CD4-positive, alpha-beta T cell (primary cell): ENCODE measurements at regions of chr1 and their contacts with region 1.

Region 1: GRCh38 chr1:9234223-9235095 is at the start of gene H6PD:
- DNase-seq: peak; percentile 39 to 91 (median 66)
- ATAC-seq: peak; percentile 80
- H3K4me3 ChIP-seq: peak within 1 kb of the TSS; percentile 78
- H3K4me3 Mint-ChIP-seq: peak within 1 kb of the TSS; percentile 97
- H3K27ac ChIP-seq: peak within 1 kb of the TSS; percentile 59 to 68
- H3K27ac Mint-ChIP-seq: peak within 1 kb of the TSS; percentile 87
- H3K4me1 ChIP-seq: peaks cover 41% of the 10 kb centered on the region
- H3K4me1 Mint-ChIP-seq: peaks cover 37% of the 10 kb centered on the region
- H3K27me3 ChIP-seq: no peaks in the 10 kb centered on the region
- H3K27me3 Mint-ChIP-seq: no peaks in the 10 kb centered on the region
- CTCF ChIP-seq: peak; percentile 14
- total RNA-seq, gene H6PD: 13.6 to 13.9 TPM

Region 2: DNA sequence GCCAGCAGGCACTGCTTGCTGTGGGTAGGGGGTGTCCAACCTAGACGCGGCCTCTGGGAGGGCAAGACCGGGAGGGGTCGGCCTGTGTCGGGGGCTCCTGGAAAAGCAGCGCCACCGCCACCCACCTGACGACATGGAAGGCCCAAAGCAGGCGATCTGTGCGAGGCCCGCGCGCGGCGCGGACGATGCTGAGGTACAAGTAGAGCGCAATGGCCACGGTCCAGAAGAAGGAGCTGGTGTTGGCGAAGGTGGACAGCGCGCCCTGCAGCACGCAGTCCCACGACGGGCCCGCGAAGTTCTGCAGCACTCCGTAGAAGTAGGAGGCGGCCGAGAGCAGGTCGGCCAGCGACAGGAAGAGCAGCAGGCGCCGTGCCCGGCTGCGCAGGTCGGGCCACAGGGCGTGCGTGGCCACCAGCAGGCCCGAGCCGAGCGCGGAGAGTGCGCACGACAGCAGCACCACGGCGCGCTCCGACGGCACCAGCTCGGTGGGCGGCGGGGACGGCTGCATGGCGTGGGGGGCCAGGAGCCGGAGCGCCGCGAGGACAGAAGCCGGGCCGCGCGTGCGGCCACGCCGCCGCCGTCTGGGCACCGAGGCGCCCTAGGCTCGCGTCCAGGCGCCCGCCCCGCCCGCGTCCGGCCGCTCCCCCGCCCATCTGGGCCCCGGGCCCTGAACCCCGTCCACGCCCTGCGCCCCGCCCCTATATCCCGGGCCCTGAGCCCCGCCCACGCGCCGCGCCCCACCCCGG is 105.8 kb before region 1 on chr1 and contains the start of gene GPR157:
- CTCF ChIA-PET with region 1: interaction called, 5 read pairs
- POLR2A ChIA-PET with region 1: interaction called, 4 read pairs
- intact Hi-C with region 1: loop called in 1 of 2 experiments (anchors 2 kb)
- DNase-seq: peak; percentile 65 to 93 (median 81)
- ATAC-seq: peak; percentile 86
- H3K4me3 ChIP-seq: peak within 1 kb of the TSS; percentile 70
- H3K4me3 Mint-ChIP-seq: peak within 1 kb of the TSS; percentile 91
- H3K27ac ChIP-seq: peak within 1 kb of the TSS; percentile 56
- H3K27ac Mint-ChIP-seq: peak within 1 kb of the TSS; percentile 70
- H3K4me1 ChIP-seq: peaks cover 25% of the 10 kb centered on the region
- H3K4me1 Mint-ChIP-seq: peaks cover 40% of the 10 kb centered on the region
- H3K27me3 ChIP-seq: no peaks in the 10 kb centered on the region
- H3K27me3 Mint-ChIP-seq: no peaks in the 10 kb centered on the region
- CTCF ChIP-seq: no peak
- total RNA-seq, gene GPR157: 2.1 to 5.1 TPM

Region 3: DNA sequence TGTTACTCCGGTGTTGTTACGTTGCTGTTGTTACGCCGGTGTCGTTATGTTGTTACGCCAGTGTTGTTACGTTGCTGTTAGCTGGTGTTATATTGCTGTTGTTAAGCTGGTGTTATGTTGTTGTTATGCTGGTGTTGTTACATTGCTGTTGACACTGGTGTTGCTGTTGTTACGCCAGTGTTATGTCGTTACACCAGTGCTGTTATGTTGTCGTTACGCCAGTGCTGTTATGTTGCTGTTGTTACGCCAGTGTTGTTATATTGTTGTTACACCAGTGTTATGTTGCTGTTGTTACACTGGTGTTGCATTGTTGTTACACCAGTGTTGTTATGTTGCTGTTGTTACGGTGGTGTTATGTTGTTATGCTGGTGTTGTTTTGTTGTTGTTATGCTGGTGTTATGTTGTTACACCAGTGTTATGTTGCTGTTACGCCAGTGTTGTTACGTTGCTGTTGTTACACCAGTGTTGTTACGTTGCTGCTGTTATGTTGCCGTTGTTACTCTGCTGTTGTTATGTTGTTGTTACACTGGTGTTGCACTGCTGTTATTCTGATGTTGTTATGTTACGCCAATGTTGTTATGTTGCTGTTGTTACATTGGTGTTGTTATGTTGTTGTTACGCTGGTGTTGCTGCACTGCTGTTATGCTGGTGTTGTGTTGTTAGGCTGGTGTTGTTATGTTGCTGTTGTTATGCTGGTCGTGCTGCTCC is 25.8 kb after region 1 on chr1:
- CTCF ChIA-PET with region 1: no interaction called
- POLR2A ChIA-PET with region 1: no interaction called
- intact Hi-C with region 1: no loop called
- DNase-seq: no peak
- ATAC-seq: no peak
- H3K4me3 ChIP-seq: no peak overlapping the region
- H3K4me3 Mint-ChIP-seq: no peak overlapping the region
- H3K27ac ChIP-seq: no peak overlapping the region
- H3K27ac Mint-ChIP-seq: no peak overlapping the region
- H3K4me1 ChIP-seq: peaks cover 6% of the 10 kb centered on the region
- H3K4me1 Mint-ChIP-seq: peaks cover 30% of the 10 kb centered on the region
- H3K27me3 ChIP-seq: no peaks in the 10 kb centered on the region
- H3K27me3 Mint-ChIP-seq: no peaks in the 10 kb centered on the region
- CTCF ChIP-seq: no peak

Region 4: DNA sequence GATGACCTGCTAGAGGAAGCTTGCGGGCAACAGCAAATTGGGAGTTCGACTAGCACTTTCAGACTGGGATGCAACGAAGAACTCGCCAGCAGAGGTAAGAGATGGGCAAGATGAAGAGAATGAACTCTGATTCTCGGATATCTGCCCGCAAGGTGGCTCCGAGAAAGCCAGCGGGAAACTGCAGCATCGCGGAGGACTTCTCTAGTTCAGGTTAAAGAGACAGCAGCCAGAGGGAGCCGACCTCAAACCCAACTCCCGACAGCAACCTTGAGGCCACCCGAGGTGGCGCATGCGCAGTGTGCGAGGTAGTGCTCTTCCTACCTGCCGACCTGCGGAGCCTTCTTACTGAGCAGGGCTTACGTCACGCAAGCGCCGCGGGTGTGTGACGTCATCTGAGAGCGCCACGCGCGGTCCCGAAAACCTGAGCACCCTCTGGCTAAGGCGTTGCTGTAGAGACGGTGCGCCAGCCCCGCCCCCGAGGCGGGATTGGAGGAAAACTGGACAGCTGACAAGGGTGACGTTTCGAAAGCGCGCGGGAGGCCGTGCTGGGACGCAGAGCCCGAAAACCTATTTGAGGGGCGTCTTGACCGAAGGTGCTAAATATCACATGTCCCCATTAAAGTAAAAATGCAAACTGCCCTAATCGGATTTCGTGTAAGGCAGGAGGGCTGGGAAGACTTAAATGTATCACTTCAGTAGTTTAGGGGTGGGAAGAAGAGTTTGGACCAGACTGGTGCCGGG is 194.3 kb after region 1 on chr1:
- CTCF ChIA-PET with region 1: interaction called, 3 read pairs
- POLR2A ChIA-PET with region 1: interaction called, 4 read pairs
- intact Hi-C with region 1: loop called in 1 of 2 experiments (anchors 5 kb)
- DNase-seq: peak; percentile 99 to 100 (median 100)
- ATAC-seq: peak; percentile 72
- H3K4me3 ChIP-seq: peak overlapping the region; percentile 66
- H3K4me3 Mint-ChIP-seq: peak overlapping the region; percentile 91
- H3K27ac ChIP-seq: peak overlapping the region; percentile 72 to 82
- H3K27ac Mint-ChIP-seq: peak overlapping the region; percentile 92
- H3K4me1 ChIP-seq: peaks cover 55% of the 10 kb centered on the region
- H3K4me1 Mint-ChIP-seq: peaks cover 56% of the 10 kb centered on the region
- H3K27me3 ChIP-seq: no peaks in the 10 kb centered on the region
- H3K27me3 Mint-ChIP-seq: no peaks in the 10 kb centered on the region
- CTCF ChIP-seq: no peak

Region 5: GRCh38 chr1:9588551-9589143 is 354.2 kb after region 1 on chr1 and contains the start of gene TMEM201:
- CTCF ChIA-PET with region 1: interaction called, 3 read pairs
- POLR2A ChIA-PET with region 1: no interaction called
- intact Hi-C with region 1: loop called in 1 of 2 experiments (anchors 2 kb)
- DNase-seq: peak; percentile 87 to 98 (median 94)
- ATAC-seq: peak; percentile 91
- H3K4me3 ChIP-seq: peak within 1 kb of the TSS; percentile 66
- H3K4me3 Mint-ChIP-seq: peak within 1 kb of the TSS; percentile 92
- H3K27ac ChIP-seq: no peak within 1 kb of the TSS
- H3K27ac Mint-ChIP-seq: peak within 1 kb of the TSS; percentile 65
- H3K4me1 ChIP-seq: peaks cover 38% of the 10 kb centered on the region
- H3K4me1 Mint-ChIP-seq: peaks cover 33% of the 10 kb centered on the region
- H3K27me3 ChIP-seq: no peaks in the 10 kb centered on the region
- H3K27me3 Mint-ChIP-seq: no peaks in the 10 kb centered on the region
- CTCF ChIP-seq: peak; percentile 6
- total RNA-seq, gene TMEM201: 9.1 to 9.2 TPM

Region 6: DNA sequence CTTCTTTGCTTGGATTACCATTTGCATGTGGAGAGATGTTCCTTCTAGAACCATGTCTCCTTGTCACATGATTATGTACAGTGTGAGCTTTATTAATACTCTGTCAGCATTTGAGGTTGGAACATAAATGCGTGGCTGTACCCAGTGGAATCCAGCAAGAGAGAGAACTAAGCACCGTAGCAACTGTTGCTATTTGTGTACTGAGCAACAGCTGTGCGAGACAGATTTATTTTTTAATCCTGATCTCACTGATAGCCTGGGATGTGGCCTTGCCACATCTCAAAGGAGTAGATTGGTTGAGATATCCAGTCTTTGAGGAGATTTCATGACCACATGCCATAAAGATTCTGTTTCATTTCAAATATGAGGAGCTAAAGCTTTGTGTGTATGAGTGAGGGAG is 1019.3 kb after region 1 on chr1:
- CTCF ChIA-PET with region 1: no interaction called
- POLR2A ChIA-PET with region 1: no interaction called
- intact Hi-C with region 1: no loop called
- DNase-seq: no peak
- ATAC-seq: no peak
- H3K4me3 ChIP-seq: no peak overlapping the region
- H3K4me3 Mint-ChIP-seq: no peak overlapping the region
- H3K27ac ChIP-seq: no peak overlapping the region
- H3K27ac Mint-ChIP-seq: no peak overlapping the region
- H3K4me1 ChIP-seq: no peaks in the 10 kb centered on the region
- H3K4me1 Mint-ChIP-seq: peaks cover 5% of the 10 kb centered on the region
- H3K27me3 ChIP-seq: no peaks in the 10 kb centered on the region
- H3K27me3 Mint-ChIP-seq: no peaks in the 10 kb centered on the region
- CTCF ChIP-seq: no peak

Region 7: DNA sequence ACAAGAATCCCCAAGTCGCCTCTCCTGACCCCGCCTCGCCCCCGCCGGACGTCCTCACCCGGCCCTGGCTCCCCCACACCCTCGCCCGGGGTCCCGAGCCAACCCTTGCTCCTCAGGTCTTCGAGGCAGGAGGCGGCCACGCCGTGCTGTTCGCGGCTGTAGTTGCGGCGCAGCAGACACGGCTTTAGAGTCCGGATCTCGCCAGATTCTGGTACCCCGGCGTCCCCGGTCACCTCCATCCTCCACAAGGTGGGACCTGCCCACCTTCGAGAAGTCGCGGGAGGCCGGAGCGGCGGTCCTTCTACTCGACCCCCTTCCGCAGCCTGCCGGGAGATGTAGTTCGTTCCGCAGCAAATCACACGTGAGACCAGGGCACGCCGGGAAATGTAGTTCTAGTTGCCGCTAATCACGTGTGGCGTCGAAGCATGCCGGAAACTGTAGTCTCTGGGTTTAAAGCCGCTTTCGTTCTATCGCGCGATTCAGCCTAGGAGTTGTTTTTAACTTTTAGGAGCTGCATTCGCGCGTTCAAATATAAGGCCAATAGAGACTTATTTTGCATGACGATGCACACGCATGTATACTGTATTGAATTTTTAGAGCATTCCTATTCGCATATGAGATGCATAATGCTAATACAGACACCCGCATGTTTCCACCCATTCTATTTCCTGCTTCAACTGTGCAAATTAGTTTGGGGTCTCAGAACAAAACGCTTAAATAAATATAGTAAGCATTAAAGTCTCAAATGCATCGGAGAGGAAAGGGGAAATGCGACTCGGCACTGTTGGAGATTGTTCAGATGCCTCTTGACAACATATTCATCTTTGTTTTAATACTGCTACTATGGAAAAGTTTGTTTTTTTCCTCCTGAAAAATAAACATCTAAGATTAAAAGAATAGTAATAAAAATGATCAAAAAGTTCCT is 1238.0 kb after region 1 on chr1 and contains the start of gene DFFA:
- CTCF ChIA-PET with region 1: no interaction called
- POLR2A ChIA-PET with region 1: no interaction called
- intact Hi-C with region 1: loop called in 1 of 2 experiments (anchors 10 kb)
- DNase-seq: peak; percentile 77 to 96 (median 87)
- ATAC-seq: peak; percentile 83
- H3K4me3 ChIP-seq: peak within 1 kb of the TSS; percentile 79
- H3K4me3 Mint-ChIP-seq: peak within 1 kb of the TSS; percentile 89
- H3K27ac ChIP-seq: peak within 1 kb of the TSS; percentile 27 to 38
- H3K27ac Mint-ChIP-seq: peak within 1 kb of the TSS; percentile 75
- H3K4me1 ChIP-seq: peaks cover 45% of the 10 kb centered on the region
- H3K4me1 Mint-ChIP-seq: peaks cover 50% of the 10 kb centered on the region
- H3K27me3 ChIP-seq: no peaks in the 10 kb centered on the region
- H3K27me3 Mint-ChIP-seq: no peaks in the 10 kb centered on the region
- CTCF ChIP-seq: no peak
- total RNA-seq, gene DFFA: 7.4 to 9.1 TPM